Heart right ventricle (tissue), 16 donors: ENCODE measurements at regions of chr3 and their contacts with region 1.

Region 1: DNA sequence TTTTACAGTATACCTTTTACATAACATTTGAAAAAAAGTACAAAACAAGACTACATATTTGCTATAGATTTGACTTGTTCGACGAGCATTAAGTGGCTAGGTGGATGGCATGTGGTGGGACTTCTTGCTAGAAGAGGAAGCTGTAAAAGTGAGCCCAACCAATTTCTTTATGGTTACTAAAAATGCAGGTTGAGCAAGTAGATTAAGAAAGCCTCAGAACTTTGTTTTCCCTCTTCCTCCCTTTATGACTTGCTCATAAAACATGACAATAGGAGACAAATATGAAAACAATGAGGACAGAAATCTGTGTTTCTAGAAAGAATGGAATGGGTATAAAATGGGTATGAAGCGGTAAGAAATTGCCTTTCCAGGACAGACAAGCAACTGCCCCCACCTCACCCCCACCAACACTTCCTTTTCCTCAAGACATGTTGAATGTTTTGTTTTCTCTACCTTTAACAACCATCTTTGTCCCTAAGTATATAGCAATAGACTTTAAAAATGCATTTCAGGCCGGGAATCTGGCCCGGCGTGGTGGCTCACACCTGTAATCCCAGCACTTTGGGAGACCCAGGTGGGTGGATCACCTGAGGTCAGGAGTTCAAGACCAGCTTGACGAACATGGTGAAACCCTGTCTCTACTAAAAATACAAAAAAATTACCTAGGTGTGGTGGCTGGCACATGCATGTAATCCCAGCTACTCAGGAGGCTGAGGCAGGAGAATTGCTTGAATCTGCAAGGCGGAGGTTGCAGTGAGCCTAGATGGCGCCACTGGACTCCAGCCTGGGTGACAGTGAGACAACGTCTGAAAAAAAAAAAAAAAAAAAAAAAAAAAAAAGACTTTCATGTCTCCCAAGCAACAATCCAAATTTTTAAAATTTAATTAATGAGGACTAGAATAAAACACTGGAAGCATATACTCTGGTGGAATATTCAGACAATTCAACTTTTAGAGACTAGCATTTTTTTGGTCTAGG is 49.7 kb upstream of the CCR4 start:
- DNase-seq: no peak
- ATAC-seq: no peak
- H3K4me3 ChIP-seq: no peak overlapping the region
- H3K27ac ChIP-seq: no peak overlapping the region
- H3K4me1 ChIP-seq: peaks cover 0 to 5% (median 0%) of the 10 kb centered on the region in 9 donors
- H3K27me3 ChIP-seq: peaks cover 0 to 54% (median 27%) of the 10 kb centered on the region in 7 donors
- CTCF ChIP-seq: peak in 2 of 9 donors; percentile 22 to 37

Region 2: GRCh38 chr3:32719335-32719734 is 182.4 kb before region 1 on chr3:
- intact Hi-C with region 1: no loop called
- DNase-seq: no peak
- ATAC-seq: no peak
- H3K4me3 ChIP-seq: no peak overlapping the region
- H3K27ac ChIP-seq: no peak overlapping the region
- H3K4me1 ChIP-seq: no peaks in the 10 kb centered on the region
- H3K27me3 ChIP-seq: no peaks in the 10 kb centered on the region
- CTCF ChIP-seq: no peak

Region 3: DNA sequence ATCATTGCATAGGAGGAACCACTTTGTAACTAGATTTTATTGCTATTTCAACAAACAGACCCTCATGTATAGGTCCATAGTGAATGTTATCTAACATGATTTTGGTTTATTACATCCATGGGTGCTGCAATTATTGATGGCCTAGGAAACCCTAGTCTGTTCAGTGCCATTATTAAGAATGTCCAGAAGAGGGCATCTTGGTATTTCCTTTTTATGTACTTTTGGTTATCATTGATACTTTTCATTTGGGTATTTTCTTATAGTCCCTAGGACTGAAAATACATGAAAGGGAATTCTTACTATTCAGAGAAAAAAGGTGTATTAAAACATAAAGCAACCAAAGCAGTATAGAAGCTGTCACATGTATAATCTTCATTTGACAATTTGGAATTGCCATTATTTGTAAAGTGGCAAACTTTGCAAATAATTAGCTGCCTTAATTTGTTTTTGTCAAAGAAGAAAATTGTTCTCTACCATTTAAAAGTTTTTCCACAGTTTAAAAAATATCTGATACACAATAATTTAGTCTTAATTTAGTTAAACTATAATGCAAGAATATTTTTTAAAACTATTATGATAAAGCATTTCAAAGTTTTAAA is 168.0 kb before region 1 on chr3:
- intact Hi-C with region 1: loop called in 1 of 10 experiments (anchors 10 kb)
- DNase-seq: no peak
- ATAC-seq: no peak
- H3K4me3 ChIP-seq: no peak overlapping the region
- H3K27ac ChIP-seq: no peak overlapping the region
- H3K4me1 ChIP-seq: no peaks in the 10 kb centered on the region
- H3K27me3 ChIP-seq: no peaks in the 10 kb centered on the region
- CTCF ChIP-seq: peak; percentile 18 to 68 (median 60)

Region 4: GRCh38 chr3:32850226-32850625 is 51.5 kb before region 1 on chr3:
- intact Hi-C with region 1: loop called in 1 of 10 experiments (anchors 1 kb)
- DNase-seq: no peak
- ATAC-seq: peak in 1 of 8 donors; percentile 48
- H3K4me3 ChIP-seq: no peak overlapping the region
- H3K27ac ChIP-seq: no peak overlapping the region
- H3K4me1 ChIP-seq: peaks cover 0 to 14% (median 5%) of the 10 kb centered on the region in 9 donors
- H3K27me3 ChIP-seq: no peaks in the 10 kb centered on the region
- CTCF ChIP-seq: no peak

Region 5: DNA sequence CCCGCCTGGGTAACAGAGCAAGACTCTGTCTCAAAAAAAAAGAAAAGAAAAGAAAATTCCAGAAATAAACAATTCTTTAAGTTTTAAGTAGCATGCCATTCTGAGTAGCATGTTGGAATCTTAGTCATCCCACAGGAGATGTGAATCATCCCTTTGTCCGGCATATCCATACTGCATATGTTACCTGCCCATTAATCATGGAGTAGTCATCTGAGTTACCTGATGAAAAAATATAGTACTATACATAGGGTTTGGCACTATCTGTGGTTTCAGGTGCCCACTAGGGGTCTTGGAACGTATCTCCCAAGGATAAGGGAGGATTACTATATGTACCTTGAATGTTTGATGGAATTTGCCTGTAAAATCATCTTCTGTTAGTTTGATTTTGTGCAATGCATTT is 43.4 kb after region 1 on chr3:
- intact Hi-C with region 1: no loop called
- DNase-seq: no peak
- ATAC-seq: no peak
- H3K4me3 ChIP-seq: no peak overlapping the region
- H3K27ac ChIP-seq: no peak overlapping the region
- H3K4me1 ChIP-seq: peaks cover 0 to 3% (median 0%) of the 10 kb centered on the region in 9 donors
- H3K27me3 ChIP-seq: no peaks in the 10 kb centered on the region
- CTCF ChIP-seq: no peak

Region 6: DNA sequence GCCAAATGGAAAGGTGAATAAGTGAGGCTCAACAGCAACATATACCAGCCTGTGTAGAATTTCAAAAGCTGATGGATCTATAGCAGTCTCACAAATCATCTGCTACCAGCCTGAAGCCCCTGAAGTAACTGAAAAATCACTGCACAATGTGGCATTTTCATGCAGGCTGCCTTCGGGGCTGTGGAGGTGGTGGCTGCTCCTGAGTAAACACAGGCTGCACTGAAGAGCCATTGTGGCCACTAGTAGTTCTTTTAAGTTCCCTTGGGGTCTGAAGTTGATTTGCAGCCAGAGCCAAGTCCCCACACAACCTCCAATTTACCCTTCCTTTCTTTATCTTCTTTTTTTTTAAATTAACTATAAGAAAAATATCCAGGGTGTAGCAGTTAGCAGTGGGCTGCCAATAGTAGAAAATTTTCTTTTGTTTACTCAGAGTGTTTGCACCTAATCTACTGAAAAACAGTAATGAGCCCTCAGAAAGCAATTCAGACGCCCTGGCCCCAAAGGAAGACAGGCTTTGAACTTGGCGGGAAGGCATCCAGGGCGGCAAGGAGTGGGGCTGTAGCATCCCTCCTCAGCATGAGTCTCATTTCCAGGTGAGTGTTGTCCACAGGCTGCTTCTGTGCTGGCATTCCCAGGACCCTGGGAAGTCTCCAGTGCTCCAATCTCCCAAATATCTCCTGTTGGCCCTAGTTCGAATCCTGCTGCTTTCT is 330.2 kb after region 1 on chr3:
- intact Hi-C with region 1: no loop called
- DNase-seq: no peak
- ATAC-seq: no peak
- H3K4me3 ChIP-seq: no peak overlapping the region
- H3K27ac ChIP-seq: no peak overlapping the region
- H3K4me1 ChIP-seq: no peaks in the 10 kb centered on the region
- H3K27me3 ChIP-seq: peaks cover 0 to 13% (median 0%) of the 10 kb centered on the region in 7 donors
- CTCF ChIP-seq: no peak